ENCODE measurements at regions of chr5 and their contacts with region 1.

Region 1: DNA sequence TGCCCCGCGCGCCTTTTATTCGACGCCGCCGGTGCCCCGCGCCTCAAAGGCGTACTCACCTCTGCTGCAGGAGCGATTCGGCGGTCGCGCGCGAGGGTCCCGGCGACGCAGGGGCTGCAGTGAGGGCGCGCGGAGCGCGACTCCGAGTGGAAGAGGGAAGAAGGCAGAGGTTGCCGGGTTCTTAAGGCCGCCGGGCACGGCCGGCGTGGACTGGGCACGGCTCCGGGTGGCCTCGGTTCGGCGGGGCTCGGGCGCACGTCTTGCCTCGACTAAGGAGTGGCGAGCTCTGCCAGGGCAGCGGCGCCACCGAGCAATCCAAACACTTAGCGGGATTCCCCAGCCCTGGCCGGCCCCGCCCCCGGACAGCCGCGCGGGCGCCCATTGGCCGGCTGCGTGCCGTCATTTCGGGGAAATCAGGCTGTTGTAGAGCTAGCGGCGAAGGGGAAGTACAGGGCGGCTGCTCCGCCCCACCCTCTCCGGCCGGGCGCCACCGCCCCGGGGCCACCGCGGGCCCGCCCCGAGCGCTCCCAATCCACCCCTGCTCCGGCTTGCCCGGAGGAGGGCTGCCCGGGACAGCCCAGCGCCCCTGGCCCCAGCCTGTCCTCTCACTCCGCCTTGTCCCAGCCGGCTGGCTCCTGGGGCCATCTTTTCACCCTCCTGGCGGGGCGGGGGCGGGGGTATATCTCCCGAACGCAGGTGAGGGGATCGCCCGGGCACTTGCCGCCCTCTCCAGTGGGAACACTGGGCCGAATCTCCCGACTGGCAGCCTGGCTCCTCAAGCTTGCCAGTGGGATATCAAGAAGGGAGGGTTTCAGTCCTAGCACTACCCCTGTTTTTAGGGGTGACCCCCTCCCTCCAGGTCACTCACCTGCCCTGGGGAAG is at the start of gene IRF1:
- DNase-seq: peak; percentile 95 to 98 (median 98)
- H3K4me3 ChIP-seq: peak within 1 kb of the TSS; percentile 81 to 98 (median 95)
- H3K27ac ChIP-seq: peak within 1 kb of the TSS; percentile 89 to 95
- H3K4me1 ChIP-seq: peaks cover 24 to 90% (median 79%) of the 10 kb centered on the region in 4 experiments
- H3K27me3 ChIP-seq: no peaks in the 10 kb centered on the region

Region 2: DNA sequence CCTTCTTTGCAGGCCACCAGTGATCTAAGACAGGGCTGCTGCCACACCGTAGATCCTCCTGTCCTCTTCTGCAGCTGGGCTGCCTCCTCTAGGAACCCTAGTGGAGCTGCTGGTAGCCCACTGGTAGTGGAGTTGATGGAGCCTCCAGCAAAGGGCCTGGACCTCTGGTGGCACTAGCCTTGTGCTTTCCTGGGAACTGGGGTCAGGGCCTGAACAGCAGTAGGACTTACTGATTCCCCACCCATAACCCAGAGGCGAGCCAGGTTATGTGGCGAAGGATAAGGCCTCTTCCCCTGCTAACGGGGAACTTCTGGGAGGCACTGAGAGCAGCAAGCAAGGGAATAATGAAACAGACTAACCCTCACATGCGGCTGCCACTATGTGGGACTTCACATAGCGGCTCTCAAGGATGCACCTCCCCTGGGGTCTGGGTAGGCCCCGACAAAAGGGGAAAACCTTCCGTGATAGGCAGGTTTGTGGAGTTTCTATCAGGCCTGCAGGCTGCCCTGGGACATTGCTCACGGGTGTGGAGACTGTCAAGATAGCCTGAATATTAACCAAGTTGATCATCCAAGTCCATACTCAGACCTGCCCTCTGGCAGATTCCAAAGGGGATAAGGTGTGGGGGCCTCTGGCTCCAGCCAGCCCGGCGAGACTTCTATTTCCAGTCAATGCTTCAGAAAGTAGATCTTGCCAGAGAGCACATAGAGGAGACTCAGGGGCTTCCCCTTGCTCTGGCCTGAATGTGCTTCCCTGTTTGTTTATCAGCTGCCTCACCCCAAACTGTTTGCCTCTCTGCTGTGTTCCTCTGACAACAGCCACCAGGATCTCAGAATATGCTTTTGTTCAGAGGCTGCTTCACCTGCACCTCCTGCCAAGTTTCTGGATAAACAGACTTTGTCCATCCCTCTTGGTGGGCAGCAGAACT is 189.1 kb before region 1 on chr5:
- CTCF ChIA-PET with region 1: no interaction called
- POLR2A ChIA-PET with region 1: no interaction called
- DNase-seq: peak in 2 of 3 donors; percentile 30 to 47
- H3K4me3 ChIP-seq: no peak overlapping the region
- H3K27ac ChIP-seq: no peak overlapping the region
- H3K4me1 ChIP-seq: peaks cover 0 to 11% (median 0%) of the 10 kb centered on the region in 4 experiments
- H3K27me3 ChIP-seq: no peaks in the 10 kb centered on the region

Region 3: GRCh38 chr5:132419502-132420468 is 70.9 kb before region 1 on chr5:
- CTCF ChIA-PET with region 1: interaction called, 19 read pairs
- POLR2A ChIA-PET with region 1: interaction called, 21 read pairs
- DNase-seq: peak; percentile 74 to 83 (median 81)
- H3K4me3 ChIP-seq: peak overlapping the region in 4 of 7 experiments; percentile 27 to 58 (median 39)
- H3K27ac ChIP-seq: peak overlapping the region; percentile 71 to 80
- H3K4me1 ChIP-seq: peaks cover 41 to 97% (median 83%) of the 10 kb centered on the region in 4 experiments
- H3K27me3 ChIP-seq: no peaks in the 10 kb centered on the region

Region 4: GRCh38 chr5:132437604-132438266 is 53.0 kb before region 1 on chr5:
- CTCF ChIA-PET with region 1: interaction called, 13 read pairs
- POLR2A ChIA-PET with region 1: interaction called, 9 read pairs
- DNase-seq: peak in 2 of 3 donors; percentile 62 to 72
- H3K4me3 ChIP-seq: peak overlapping the region in 1 of 7 experiments; percentile 10
- H3K27ac ChIP-seq: peak overlapping the region; percentile 37 to 75
- H3K4me1 ChIP-seq: peaks cover 16 to 74% (median 62%) of the 10 kb centered on the region in 4 experiments
- H3K27me3 ChIP-seq: no peaks in the 10 kb centered on the region

Region 5: DNA sequence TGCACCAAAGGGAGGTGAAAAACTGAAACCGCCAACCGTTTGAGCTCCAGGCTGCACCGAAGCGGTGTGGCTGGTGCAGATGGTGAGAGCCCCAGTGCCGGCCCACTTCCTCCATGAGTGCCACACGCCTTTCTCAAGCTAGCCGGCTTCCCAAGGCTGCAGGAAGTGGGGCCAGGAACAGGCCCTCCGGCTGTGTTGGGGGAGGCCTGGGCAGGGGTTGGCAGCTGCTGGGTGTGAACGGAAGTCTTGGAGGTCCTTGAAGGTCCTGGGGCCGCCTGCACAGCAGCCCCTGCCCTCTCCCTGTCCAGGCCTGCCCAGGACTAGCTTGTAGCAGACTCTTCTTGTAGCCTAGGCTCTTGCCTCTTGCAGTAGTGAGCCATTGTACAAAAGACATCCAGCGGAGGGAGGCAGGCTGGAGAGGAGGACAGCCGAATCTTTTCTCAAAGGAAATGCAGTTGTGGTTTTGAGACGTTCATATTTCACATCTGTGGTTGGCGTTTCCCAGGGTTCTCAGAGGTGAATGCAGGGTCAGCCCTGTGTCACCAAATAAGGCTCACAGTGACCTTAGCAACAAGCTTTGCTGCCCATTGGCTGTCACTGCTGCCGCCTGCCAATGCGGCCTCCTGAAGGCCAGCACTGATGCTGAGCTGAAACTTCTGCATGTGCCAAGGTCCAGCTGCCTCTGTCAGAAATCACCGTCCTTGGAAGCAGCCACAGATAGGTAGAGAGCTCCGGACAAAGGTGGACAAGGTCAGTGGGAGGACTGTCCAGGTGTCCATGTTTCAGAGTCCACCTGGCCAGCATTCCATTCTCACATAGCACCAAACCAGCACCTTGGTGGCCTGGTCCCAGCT is 24.1 kb before region 1 on chr5:
- CTCF ChIA-PET with region 1: interaction called, 471 read pairs
- POLR2A ChIA-PET with region 1: interaction called, 31 read pairs
- DNase-seq: peak; percentile 88 to 99 (median 98)
- H3K4me3 ChIP-seq: peak overlapping the region in 4 of 7 experiments; percentile 29 to 66 (median 40)
- H3K27ac ChIP-seq: peak overlapping the region; percentile 67 to 69
- H3K4me1 ChIP-seq: peaks cover 45 to 93% (median 87%) of the 10 kb centered on the region in 4 experiments
- H3K27me3 ChIP-seq: no peaks in the 10 kb centered on the region

Region 6: DNA sequence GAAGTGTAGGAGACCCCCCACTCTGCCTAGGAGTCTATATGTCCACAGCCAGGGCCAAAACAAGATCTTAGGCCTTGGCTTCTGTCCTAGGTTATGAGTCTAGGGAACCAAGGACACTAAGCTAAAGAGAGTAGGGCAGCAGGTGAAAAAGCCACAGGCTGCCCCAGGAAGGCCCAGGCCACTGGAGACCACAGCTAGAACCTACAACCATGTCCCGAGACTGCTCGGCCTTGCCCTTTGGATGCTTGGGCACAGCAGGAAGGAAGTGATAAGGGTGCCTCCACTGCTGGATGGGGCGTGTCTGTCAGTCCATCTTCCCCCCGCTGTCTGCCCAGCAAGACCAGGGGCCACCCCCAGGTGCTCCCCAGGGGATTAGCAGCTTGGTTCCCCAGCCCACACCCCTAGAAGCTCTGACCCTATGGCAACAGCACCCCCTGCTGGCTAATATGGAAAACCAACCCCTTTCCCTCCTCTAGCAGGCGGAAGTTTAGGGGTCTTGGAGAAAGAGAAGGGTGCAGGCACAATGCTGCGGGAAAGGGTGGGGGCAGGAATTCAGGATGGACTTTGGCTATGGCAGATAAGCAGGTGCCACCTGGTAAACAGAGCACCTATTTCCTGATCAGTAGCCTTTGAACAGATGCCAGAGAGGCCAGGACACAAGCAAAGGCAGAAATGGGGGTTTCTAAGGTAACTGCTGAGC is 10.4 kb after region 1 on chr5:
- CTCF ChIA-PET with region 1: interaction called, 471 read pairs
- POLR2A ChIA-PET with region 1: interaction called, 17 read pairs
- DNase-seq: peak; percentile 82 to 91 (median 91)
- H3K4me3 ChIP-seq: no peak overlapping the region
- H3K27ac ChIP-seq: peak overlapping the region in 1 of 2 experiments; percentile 35
- H3K4me1 ChIP-seq: peaks cover 0 to 40% (median 29%) of the 10 kb centered on the region in 4 experiments
- H3K27me3 ChIP-seq: no peaks in the 10 kb centered on the region

Measured in common myeloid progenitor, CD34-positive (primary cell).